ENCODE measurements at regions of chr7 and their contacts with region 1.

Region 1: DNA sequence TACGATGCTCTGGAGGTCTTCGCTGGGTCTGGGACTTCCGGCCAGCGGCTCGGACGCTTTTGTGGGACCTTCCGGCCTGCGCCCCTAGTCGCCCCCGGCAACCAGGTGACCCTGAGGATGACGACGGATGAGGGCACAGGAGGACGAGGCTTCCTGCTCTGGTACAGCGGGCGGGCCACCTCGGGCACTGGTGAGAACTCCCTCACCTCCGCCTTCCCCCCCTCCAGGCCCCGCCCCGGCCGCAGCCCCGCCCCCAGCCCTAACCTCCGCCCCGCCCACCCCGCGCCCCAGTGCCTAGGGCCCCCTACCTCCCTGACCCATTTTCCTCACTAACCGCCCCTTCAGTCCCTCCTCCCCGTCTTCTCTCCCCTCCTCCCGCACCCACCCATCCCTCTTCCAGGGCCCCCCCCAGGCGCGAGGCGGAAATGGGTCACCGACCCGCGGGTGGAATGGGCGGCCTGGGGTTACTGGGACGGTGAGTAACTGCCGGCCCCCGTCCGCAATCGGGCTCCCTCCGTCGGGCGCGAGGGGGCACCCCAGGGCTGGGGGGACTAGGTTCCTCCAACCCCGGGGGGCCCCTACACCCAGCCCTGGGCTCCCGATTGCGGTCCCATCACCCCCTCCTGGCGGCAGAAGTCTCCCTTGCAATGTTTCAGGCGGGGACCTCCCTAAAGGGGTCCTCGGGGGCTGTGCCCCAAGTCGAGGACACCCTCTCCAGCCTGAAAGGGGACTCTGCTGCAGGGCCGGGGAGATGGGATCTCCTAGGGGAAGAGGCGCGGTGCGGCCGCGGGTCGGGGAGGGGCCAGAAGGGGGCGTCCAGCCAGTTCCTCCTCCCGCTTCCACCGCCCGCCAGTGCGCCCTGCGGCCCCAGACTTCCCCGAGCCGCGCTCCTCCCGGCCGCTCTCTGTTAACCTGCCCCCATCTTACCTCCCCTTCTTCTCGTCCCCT is 2.1 kb downstream of the PCOLCE start:
- DNase-seq: peak; percentile 93
- H3K4me3 ChIP-seq: peak overlapping the region; percentile 74 to 81 (median 78)
- H3K27ac ChIP-seq: peak overlapping the region; percentile 84 to 90 (median 84)
- H3K4me1 ChIP-seq: peaks cover 0 to 41% (median 29%) of the 10 kb centered on the region in 4 donors
- H3K27me3 ChIP-seq: no peaks in the 10 kb centered on the region
- CTCF ChIP-seq: peak in 3 of 4 experiments; percentile 24 to 45 (median 43)
- EP300 ChIP-seq: no peak
- POLR2A ChIP-seq: peak in 1 of 2 donors; percentile 26

Region 2: GRCh38 chr7:100586266-100587025 is 17.9 kb before region 1 on chr7 and contains the start of gene FBXO24:
- intact Hi-C with region 1: loop called (anchors 1 kb)
- DNase-seq: peak; percentile 100
- H3K4me3 ChIP-seq: peak within 1 kb of the TSS; percentile 90 to 99 (median 94)
- H3K27ac ChIP-seq: peak within 1 kb of the TSS; percentile 91 to 96 (median 94)
- H3K4me1 ChIP-seq: peaks cover 0 to 44% (median 35%) of the 10 kb centered on the region in 4 donors
- H3K27me3 ChIP-seq: peaks cover 0 to 11% (median 0%) of the 10 kb centered on the region in 3 donors
- CTCF ChIP-seq: no peak
- EP300 ChIP-seq: no peak
- POLR2A ChIP-seq: peak; percentile 17 to 31
- total RNA-seq, gene FBXO24: 0.27 to 2.8 (median 0.71) TPM in 3 of 4 donors, not detected in the other

Measured in sigmoid colon (tissue), 7 donors.